K562 (cell line): ENCODE measurements at regions of chr6 and their contacts with region 1.

Region 1: GRCh38 chr6:159654483-159655098 is 38.5 kb downstream of the SOD2 start:
- DNase-seq: peak; percentile 36 to 66 (median 42)
- ATAC-seq: peak; percentile 76
- H3K4me3 ChIP-seq: no peak overlapping the region
- H3K27ac ChIP-seq: no peak overlapping the region
- H3K4me1 ChIP-seq: no peaks in the 10 kb centered on the region
- H3K27me3 ChIP-seq: no peaks in the 10 kb centered on the region
- CTCF ChIP-seq: peak; percentile 52 to 75 (median 62); a peak in 5 of 6 replicates
- EP300 ChIP-seq: no peak
- POLR2A ChIP-seq: no peak
- RAD21 ChIP-seq: peak; percentile 74 to 75

Region 2: DNA sequence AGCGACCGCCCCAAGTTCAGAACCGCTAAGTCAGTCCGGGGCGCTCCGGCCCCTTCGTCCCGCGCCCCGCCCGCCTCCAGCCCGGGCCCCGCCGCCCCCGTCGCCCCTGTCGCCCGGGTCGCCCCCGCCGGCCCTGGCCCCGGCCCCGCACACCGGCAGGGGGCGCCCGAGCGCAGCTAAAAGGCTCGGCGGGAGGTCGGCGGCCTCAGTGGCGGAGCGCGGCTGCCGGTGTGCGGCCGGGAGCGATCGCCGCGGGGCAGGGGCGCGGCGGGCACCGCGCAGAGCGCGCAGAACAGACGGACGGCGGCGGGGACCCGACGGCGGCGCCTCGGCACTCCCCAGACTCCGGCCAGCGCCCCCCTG is 485.4 kb before region 1 on chr6 and contains the start of gene FNDC1:
- CTCF ChIA-PET with region 1: interaction called, 24 read pairs
- POLR2A ChIA-PET with region 1: no interaction called
- in situ Hi-C with region 1: loop called (anchors 5 kb)
- intact Hi-C with region 1: loop called (anchors 1 kb)
- DNase-seq: peak; percentile 35 to 84 (median 81)
- ATAC-seq: peak; percentile 92
- H3K4me3 ChIP-seq: no peak within 1 kb of the TSS; the same call in 1 of the 2 replicates
- H3K27ac ChIP-seq: no peak within 1 kb of the TSS
- H3K4me1 ChIP-seq: peaks cover 0 to 17% of the 10 kb centered on the region in 2 experiments; a peak in 2 of 5 replicates
- H3K27me3 ChIP-seq: peaks cover 20 to 44% of the 10 kb centered on the region in 2 experiments
- CTCF ChIP-seq: peak in 2 of 3 experiments; percentile 27 to 67; a peak in 4 of 6 replicates
- EP300 ChIP-seq: no peak
- POLR2A ChIP-seq: no peak
- RAD21 ChIP-seq: no peak
- polyA plus RNA-seq, gene FNDC1: not detected

Region 3: DNA sequence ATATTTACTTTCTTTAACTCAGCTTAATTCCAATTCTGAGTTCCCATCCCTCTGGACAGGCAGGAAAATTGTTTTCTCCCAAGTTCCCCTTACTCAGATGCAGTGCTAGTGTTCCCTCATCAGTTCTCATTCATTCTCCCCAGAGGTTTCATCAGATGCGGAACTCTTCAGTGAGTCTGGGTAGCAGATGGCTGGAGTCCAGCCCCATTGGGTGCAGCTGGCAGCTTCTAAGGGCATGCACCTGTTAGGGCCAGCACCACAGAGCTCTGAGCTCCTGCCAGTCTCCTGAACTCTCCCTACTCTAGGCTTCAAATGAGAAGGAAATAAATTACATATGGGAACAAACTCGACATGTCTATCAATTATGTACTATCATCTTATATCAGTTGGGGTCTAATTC is 38.1 kb before region 1 on chr6:
- CTCF ChIA-PET with region 1: no interaction called
- POLR2A ChIA-PET with region 1: no interaction called
- in situ Hi-C with region 1: no loop called
- intact Hi-C with region 1: no loop called
- DNase-seq: no peak
- ATAC-seq: no peak
- H3K4me3 ChIP-seq: no peak overlapping the region
- H3K27ac ChIP-seq: no peak overlapping the region
- H3K4me1 ChIP-seq: no peaks in the 10 kb centered on the region
- H3K27me3 ChIP-seq: peaks cover 4 to 30% of the 10 kb centered on the region in 2 experiments; a peak in 4 of 5 replicates
- CTCF ChIP-seq: no peak
- EP300 ChIP-seq: no peak
- POLR2A ChIP-seq: no peak
- RAD21 ChIP-seq: no peak